ENCODE measurements at regions of chr10 and their contacts with region 1.

Region 1: GRCh38 chr10:3668276-3668965 is 116.6 kb downstream of the KLF6 start:
- DNase-seq: peak; percentile 72
- H3K4me3 ChIP-seq: no peak overlapping the region
- H3K27ac ChIP-seq: peak overlapping the region; percentile 68
- H3K4me1 ChIP-seq: peaks cover 44% of the 10 kb centered on the region
- H3K27me3 ChIP-seq: no peaks in the 10 kb centered on the region
- CTCF ChIP-seq: no peak

Region 2: GRCh38 chr10:3538658-3539531 is 129.5 kb before region 1 on chr10:
- CTCF ChIA-PET with region 1: no interaction called
- POLR2A ChIA-PET with region 1: no interaction called
- intact Hi-C with region 1: no loop called
- DNase-seq: peak; percentile 73
- H3K4me3 ChIP-seq: no peak overlapping the region
- H3K27ac ChIP-seq: no peak overlapping the region
- H3K4me1 ChIP-seq: no peaks in the 10 kb centered on the region
- H3K27me3 ChIP-seq: no peaks in the 10 kb centered on the region
- CTCF ChIP-seq: no peak

Region 3: DNA sequence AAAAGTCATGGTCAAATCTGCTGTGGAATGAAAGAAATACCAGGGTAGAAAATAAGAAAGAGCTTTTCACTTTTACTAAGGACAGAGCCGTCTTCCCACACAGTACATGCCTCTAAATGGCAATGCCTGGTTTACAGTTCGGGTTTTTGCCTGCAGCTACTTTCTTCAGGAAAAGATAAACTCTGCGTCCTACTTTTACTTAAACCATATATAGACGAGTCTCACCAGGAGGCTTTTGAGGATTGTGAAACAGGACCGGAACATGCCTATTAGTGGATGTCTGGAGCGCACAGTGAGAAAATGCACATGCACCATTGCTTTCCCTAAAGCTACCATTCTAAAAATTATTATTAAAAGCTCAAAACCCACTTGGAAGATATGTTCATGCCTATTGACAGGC is 46.1 kb after region 1 on chr10:
- CTCF ChIA-PET with region 1: no interaction called
- POLR2A ChIA-PET with region 1: interaction called, 10 read pairs
- intact Hi-C with region 1: no loop called
- DNase-seq: peak; percentile 95
- H3K4me3 ChIP-seq: no peak overlapping the region
- H3K27ac ChIP-seq: peak overlapping the region; percentile 38
- H3K4me1 ChIP-seq: peaks cover 8% of the 10 kb centered on the region
- H3K27me3 ChIP-seq: no peaks in the 10 kb centered on the region
- CTCF ChIP-seq: no peak